Activated B cell treated with CpG ODN at 0.5 μM for 24 hours (primary cell): ENCODE measurements at regions of chr4 and their contacts with region 1.

Region 1: DNA sequence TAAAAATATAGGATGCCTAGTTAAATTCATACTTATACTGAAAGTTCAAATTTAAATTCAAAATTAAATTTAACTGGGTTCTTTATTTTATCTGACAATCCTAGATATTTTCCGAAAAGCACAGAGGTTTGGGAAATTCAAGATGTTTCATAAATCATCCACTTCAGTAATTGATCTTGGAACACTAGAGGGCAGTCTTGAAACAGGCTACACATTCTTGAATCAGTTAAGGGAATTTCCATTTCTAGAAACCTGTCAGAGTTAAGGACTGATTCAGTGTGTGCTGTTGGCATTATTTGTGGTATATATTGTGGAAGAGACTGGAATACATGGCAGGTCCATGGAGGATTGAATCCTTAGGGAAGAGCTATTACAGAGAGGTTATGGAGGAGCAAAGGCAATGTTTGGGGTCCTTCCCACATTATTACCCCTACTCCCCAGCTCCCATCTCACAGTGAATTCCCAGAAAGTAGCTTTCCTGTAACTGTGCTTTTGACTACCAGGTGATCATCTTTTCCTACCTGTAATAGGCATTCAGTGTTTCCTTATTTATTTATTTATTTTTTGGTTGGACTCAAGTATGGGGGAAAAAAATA is 92.9 kb downstream of the EGF start:
- DNase-seq: no peak
- ATAC-seq: peak; percentile 60
- H3K4me3 Mint-ChIP-seq: no peak overlapping the region
- H3K27ac Mint-ChIP-seq: no peak overlapping the region
- H3K4me1 Mint-ChIP-seq: no peaks in the 10 kb centered on the region
- H3K27me3 Mint-ChIP-seq: peaks cover 6% of the 10 kb centered on the region
- CTCF ChIP-seq: peak; percentile 83

Region 2: GRCh38 chr4:109967797-109968507 is 37.6 kb before region 1 on chr4:
- CTCF ChIA-PET with region 1: no interaction called
- POLR2A ChIA-PET with region 1: no interaction called
- intact Hi-C with region 1: no loop called
- DNase-seq: no peak
- ATAC-seq: peak; percentile 78
- H3K4me3 Mint-ChIP-seq: no peak overlapping the region
- H3K27ac Mint-ChIP-seq: no peak overlapping the region
- H3K4me1 Mint-ChIP-seq: peaks cover 21% of the 10 kb centered on the region
- H3K27me3 Mint-ChIP-seq: peaks cover 22% of the 10 kb centered on the region
- CTCF ChIP-seq: no peak

Region 3: DNA sequence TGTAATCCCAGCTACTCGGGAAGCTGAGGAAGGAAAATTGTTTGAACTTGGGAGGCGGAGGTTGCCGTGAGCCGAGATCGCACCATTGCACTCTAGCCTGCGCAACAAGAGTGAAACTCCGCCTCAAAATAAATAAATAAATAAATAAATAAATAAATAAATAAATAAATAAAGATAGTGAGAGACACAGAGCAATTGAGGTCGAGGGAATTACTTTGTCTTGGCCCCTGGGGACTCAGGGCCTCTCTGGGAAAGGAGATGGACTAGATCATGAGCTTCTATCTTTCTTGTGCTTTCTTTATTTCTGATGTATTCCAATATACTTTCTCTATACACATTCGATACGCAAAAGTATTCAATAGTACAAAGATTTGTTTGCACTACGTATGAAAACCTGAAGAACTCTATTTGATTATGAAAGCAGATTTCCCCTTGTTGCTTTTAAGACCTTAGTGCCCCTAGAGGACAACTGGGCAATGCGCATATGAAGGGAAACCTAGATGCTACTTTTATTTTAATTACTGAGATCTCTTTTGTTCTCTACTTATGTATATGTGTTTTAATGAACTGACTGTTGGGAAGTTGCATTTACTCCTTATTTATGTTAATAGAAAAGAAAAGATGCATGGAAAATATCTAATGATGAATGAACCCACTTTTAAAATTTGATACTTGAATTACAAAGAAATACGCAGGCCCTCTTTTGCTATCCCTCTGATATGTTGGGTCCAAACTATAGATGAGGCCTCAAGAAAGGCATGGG is 205.6 kb after region 1 on chr4:
- CTCF ChIA-PET with region 1: no interaction called
- POLR2A ChIA-PET with region 1: no interaction called
- intact Hi-C with region 1: loop called (anchors 1 kb)
- DNase-seq: no peak
- ATAC-seq: peak; percentile 49
- H3K4me3 Mint-ChIP-seq: no peak overlapping the region
- H3K27ac Mint-ChIP-seq: no peak overlapping the region
- H3K4me1 Mint-ChIP-seq: peaks cover 1% of the 10 kb centered on the region
- H3K27me3 Mint-ChIP-seq: peaks cover under 1% of the 10 kb centered on the region
- CTCF ChIP-seq: no peak

Region 4: DNA sequence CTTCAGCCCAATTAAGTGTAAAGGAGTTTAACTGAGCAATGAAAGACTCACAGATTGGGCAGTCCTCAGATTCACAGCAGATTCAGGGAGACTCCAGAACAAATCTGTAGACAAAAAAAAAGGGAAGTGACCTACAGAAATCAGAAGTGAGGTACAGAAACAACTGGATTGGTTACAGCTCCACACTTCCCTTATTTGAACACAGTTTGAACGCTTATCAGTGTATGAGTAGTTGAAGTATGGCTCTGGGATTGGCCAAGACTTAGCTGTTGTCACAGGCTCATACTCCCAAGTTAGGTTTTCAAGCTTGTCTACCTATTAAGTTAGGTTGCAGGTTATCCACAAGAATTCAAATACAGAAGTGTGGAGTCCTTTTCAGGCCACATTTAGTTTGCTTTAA is 305.2 kb after region 1 on chr4:
- CTCF ChIA-PET with region 1: no interaction called
- POLR2A ChIA-PET with region 1: no interaction called
- intact Hi-C with region 1: loop called (anchors 1 kb)
- DNase-seq: no peak
- ATAC-seq: no peak
- H3K4me3 Mint-ChIP-seq: no peak overlapping the region
- H3K27ac Mint-ChIP-seq: no peak overlapping the region
- H3K4me1 Mint-ChIP-seq: no peaks in the 10 kb centered on the region
- H3K27me3 Mint-ChIP-seq: no peaks in the 10 kb centered on the region
- CTCF ChIP-seq: no peak

Region 5: GRCh38 chr4:110510955-110511544 is 505.5 kb after region 1 on chr4:
- CTCF ChIA-PET with region 1: interaction called, 232 read pairs
- POLR2A ChIA-PET with region 1: no interaction called
- intact Hi-C with region 1: loop called (anchors 1 kb)
- DNase-seq: no peak
- ATAC-seq: no peak
- H3K4me3 Mint-ChIP-seq: no peak overlapping the region
- H3K27ac Mint-ChIP-seq: no peak overlapping the region
- H3K4me1 Mint-ChIP-seq: peaks cover 10% of the 10 kb centered on the region
- H3K27me3 Mint-ChIP-seq: peaks cover 2% of the 10 kb centered on the region
- CTCF ChIP-seq: peak; percentile 80

Region 6: DNA sequence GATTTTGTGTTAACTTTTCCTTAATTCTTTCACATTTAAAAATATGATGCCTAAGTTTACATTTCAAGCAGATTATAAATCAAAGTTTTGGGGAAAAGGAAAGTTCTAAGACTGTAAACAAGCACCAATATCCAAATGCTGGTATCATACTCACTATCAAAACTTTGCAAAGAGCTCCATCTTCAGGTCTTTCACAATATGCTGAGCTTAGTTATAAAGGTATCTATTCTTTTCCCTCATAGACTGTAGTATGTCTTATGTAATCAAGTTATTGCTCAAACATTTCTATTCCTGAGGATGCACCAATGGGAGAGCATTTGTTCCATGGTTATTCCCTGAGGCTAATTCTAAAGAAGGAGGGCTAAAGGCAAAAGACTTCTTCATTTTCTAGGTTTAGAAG is 1931.8 kb after region 1 on chr4:
- CTCF ChIA-PET with region 1: no interaction called
- POLR2A ChIA-PET with region 1: no interaction called
- intact Hi-C with region 1: loop called (anchors 10 kb)
- DNase-seq: no peak
- ATAC-seq: peak; percentile 40
- H3K4me3 Mint-ChIP-seq: no peak overlapping the region
- H3K27ac Mint-ChIP-seq: no peak overlapping the region
- H3K4me1 Mint-ChIP-seq: no peaks in the 10 kb centered on the region
- H3K27me3 Mint-ChIP-seq: peaks cover 4% of the 10 kb centered on the region
- CTCF ChIP-seq: peak; percentile 21